Natural killer cell (primary cell): ENCODE measurements at regions of chr14 and their contacts with region 1.

Region 1: DNA sequence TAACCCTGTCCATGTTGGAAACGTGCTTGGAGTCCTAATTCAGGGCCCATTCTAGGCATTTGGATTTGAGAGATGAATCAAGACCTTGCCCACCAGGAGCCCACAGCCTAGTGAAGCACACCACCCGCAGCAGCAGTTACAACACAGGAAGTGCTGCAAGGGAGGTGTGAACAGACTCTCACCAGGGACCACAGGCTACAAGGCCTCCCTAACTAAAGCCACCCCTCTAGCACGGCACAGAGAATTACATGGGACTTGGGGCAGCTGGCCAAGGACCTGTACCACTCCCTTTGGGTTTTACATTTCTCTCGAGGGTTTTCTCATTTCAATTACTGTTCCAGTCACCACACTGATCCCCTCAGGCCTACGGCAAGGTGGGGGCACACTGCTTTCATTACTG is 49.5 kb upstream of the FOXN3 start:
- DNase-seq: peak; percentile 68 to 76
- ATAC-seq: peak; percentile 96 to 100 (median 99)
- H3K4me3 ChIP-seq: no peak overlapping the region
- H3K4me3 Mint-ChIP-seq: peak overlapping the region; percentile 87
- H3K27ac ChIP-seq: peak overlapping the region; percentile 71
- H3K27ac Mint-ChIP-seq: peak overlapping the region; percentile 85 to 95
- H3K4me1 ChIP-seq: peaks cover 44% of the 10 kb centered on the region
- H3K4me1 Mint-ChIP-seq: peaks cover 67 to 81% of the 10 kb centered on the region in 2 donors
- H3K27me3 ChIP-seq: no peaks in the 10 kb centered on the region
- H3K27me3 Mint-ChIP-seq: no peaks in the 10 kb centered on the region
- CTCF ChIP-seq: no peak

Region 2: GRCh38 chr14:89198544-89199329 is 267.7 kb before region 1 on chr14:
- intact Hi-C with region 1: no loop called
- DNase-seq: no peak
- ATAC-seq: peak in 1 of 3 donors; percentile 46
- H3K4me3 ChIP-seq: no peak overlapping the region
- H3K4me3 Mint-ChIP-seq: no peak overlapping the region
- H3K27ac ChIP-seq: no peak overlapping the region
- H3K27ac Mint-ChIP-seq: peak overlapping the region; percentile 1 to 27
- H3K4me1 ChIP-seq: peaks cover 34% of the 10 kb centered on the region
- H3K4me1 Mint-ChIP-seq: peaks cover 84 to 85% of the 10 kb centered on the region in 2 donors
- H3K27me3 ChIP-seq: no peaks in the 10 kb centered on the region
- H3K27me3 Mint-ChIP-seq: no peaks in the 10 kb centered on the region
- CTCF ChIP-seq: no peak

Region 3: GRCh38 chr14:89365061-89365801 is 101.3 kb before region 1 on chr14:
- intact Hi-C with region 1: loop called (anchors 2 kb)
- DNase-seq: peak; percentile 38 to 83
- ATAC-seq: peak; percentile 92 to 96 (median 96)
- H3K4me3 ChIP-seq: peak overlapping the region; percentile 13
- H3K4me3 Mint-ChIP-seq: peak overlapping the region; percentile 88
- H3K27ac ChIP-seq: peak overlapping the region; percentile 86
- H3K27ac Mint-ChIP-seq: peak overlapping the region; percentile 88 to 90
- H3K4me1 ChIP-seq: peaks cover 34% of the 10 kb centered on the region
- H3K4me1 Mint-ChIP-seq: peaks cover 49 to 59% of the 10 kb centered on the region in 2 donors
- H3K27me3 ChIP-seq: no peaks in the 10 kb centered on the region
- H3K27me3 Mint-ChIP-seq: no peaks in the 10 kb centered on the region
- CTCF ChIP-seq: no peak

Region 4: DNA sequence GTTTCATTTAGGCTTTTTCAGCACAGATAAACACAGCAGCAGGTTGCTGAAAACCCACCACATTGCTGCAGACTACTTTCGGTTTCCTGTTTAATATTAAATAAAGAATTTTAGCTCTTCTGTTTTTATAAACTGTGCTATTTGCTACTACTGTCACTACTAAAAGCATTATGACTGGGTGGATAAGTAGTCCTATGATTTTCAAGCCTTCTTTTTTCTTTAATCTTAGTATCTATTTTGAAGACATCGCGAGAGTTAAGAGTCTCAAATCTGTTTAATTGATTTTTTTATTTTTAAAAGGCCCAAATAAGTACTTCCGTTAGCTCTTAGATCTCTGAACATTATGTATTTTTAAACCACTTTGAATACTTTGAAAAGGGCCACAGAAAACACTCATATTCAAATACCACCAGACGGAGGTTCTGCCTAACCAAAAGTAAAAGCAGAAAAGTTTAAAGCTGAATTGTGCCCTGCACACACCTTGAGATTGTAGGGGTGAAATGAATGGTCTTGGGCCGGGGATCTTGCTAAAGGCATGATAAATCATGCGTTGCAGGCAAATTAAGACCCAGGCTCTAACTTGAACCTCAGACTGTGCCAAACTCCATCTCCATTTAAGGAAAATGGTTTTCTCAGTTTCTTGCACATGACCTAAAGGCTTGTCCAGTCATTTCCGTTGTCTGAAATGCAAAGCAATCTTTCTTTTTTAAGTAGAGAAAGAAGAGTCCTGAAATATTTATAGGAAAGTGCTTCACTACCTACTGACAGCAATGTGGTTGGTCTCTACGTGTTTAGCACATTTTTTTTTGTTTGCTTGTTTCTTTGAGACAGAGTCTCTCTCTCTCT is 35.9 kb before region 1 on chr14:
- intact Hi-C with region 1: loop called (anchors 2 kb)
- DNase-seq: peak in 1 of 2 donors; percentile 77
- ATAC-seq: peak; percentile 63 to 72 (median 69)
- H3K4me3 ChIP-seq: peak overlapping the region; percentile 46
- H3K4me3 Mint-ChIP-seq: peak overlapping the region; percentile 97
- H3K27ac ChIP-seq: peak overlapping the region; percentile 85
- H3K27ac Mint-ChIP-seq: peak overlapping the region; percentile 96 to 98
- H3K4me1 ChIP-seq: peaks cover 75% of the 10 kb centered on the region
- H3K4me1 Mint-ChIP-seq: peaks cover 53 to 69% of the 10 kb centered on the region in 2 donors
- H3K27me3 ChIP-seq: no peaks in the 10 kb centered on the region
- H3K27me3 Mint-ChIP-seq: no peaks in the 10 kb centered on the region
- CTCF ChIP-seq: no peak

Region 5: DNA sequence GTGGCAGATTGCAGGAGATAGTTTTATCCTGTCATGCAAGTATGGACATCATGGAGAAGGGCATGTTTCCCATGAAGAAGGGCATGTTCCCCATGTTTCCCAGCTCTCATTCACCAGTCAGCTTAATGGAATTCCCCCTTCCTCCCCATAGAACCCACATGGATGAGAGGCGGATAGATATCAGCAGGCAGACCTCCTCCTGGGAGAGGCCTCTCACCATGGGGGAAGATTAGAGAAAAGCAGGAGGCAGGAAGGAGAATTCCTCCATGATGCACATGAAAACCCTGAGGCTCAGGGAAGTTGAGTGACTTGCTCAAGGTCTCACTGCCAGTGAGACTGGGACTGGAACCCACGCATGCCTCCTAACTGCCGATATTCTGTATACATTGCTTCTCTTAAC is 43.4 kb after region 1 on chr14:
- intact Hi-C with region 1: loop called (anchors 2 kb)
- DNase-seq: no peak
- ATAC-seq: no peak
- H3K4me3 ChIP-seq: no peak overlapping the region
- H3K4me3 Mint-ChIP-seq: peak overlapping the region; percentile 76
- H3K27ac ChIP-seq: peak overlapping the region; percentile 49
- H3K27ac Mint-ChIP-seq: peak overlapping the region; percentile 97
- H3K4me1 ChIP-seq: peaks cover 38% of the 10 kb centered on the region
- H3K4me1 Mint-ChIP-seq: peaks cover 61 to 65% of the 10 kb centered on the region in 2 donors
- H3K27me3 ChIP-seq: no peaks in the 10 kb centered on the region
- H3K27me3 Mint-ChIP-seq: no peaks in the 10 kb centered on the region
- CTCF ChIP-seq: no peak

Region 6: DNA sequence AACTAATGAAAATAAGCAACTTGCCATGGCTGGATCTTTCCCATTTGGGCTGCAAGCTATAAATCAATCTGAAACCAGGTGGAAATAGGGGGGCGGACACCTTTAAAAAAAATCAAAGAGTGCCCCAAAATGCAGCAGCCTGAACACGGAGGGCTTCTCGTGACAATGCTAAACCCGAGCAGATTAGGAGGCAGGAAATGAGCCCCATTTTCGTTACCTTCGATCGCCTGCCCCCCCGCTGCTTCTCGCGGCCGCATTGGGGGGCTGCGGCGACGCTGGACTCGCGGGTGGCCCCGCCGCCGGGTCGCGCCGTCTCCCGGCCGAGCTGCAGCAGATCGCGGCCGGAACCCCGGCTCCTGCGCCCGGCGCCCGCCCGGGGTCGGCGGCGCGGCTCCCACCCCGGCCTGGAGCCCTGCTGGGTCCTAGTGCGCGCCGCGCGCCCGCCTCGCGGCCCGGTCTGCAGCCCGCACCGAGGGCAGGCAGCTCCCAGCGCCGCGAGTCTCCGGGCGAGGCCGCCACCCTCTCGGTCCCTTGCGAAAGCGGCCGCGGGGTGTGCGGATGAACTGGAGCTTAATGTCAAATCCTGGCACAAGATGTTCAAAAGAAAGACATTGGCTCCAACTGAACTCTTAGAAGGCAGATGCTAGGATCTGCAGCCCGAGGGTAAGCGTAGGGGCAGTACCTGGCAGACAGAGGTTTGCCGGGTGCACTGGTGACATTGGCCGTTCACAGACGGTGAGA is 152.5 kb after region 1 on chr14:
- intact Hi-C with region 1: loop called (anchors 2 kb)
- DNase-seq: peak; percentile 70 to 84
- ATAC-seq: peak; percentile 38 to 71 (median 68)
- H3K4me3 ChIP-seq: peak overlapping the region; percentile 85
- H3K4me3 Mint-ChIP-seq: peak overlapping the region; percentile 97
- H3K27ac ChIP-seq: peak overlapping the region; percentile 96
- H3K27ac Mint-ChIP-seq: peak overlapping the region; percentile 90 to 98
- H3K4me1 ChIP-seq: peaks cover 24% of the 10 kb centered on the region
- H3K4me1 Mint-ChIP-seq: peaks cover 55 to 60% of the 10 kb centered on the region in 2 donors
- H3K27me3 ChIP-seq: no peaks in the 10 kb centered on the region
- H3K27me3 Mint-ChIP-seq: no peaks in the 10 kb centered on the region
- CTCF ChIP-seq: no peak

Region 7: GRCh38 chr14:89625244-89625713 is 158.8 kb after region 1 on chr14:
- intact Hi-C with region 1: loop called (anchors 1 kb)
- DNase-seq: no peak
- ATAC-seq: no peak
- H3K4me3 ChIP-seq: no peak overlapping the region
- H3K4me3 Mint-ChIP-seq: peak overlapping the region; percentile 40
- H3K27ac ChIP-seq: peak overlapping the region; percentile 85
- H3K27ac Mint-ChIP-seq: peak overlapping the region; percentile 90 to 95
- H3K4me1 ChIP-seq: peaks cover 33% of the 10 kb centered on the region
- H3K4me1 Mint-ChIP-seq: peaks cover 52 to 56% of the 10 kb centered on the region in 2 donors
- H3K27me3 ChIP-seq: no peaks in the 10 kb centered on the region
- H3K27me3 Mint-ChIP-seq: no peaks in the 10 kb centered on the region
- CTCF ChIP-seq: no peak

Region 8: GRCh38 chr14:89773644-89774316 is 307.3 kb after region 1 on chr14:
- intact Hi-C with region 1: loop called (anchors 5 kb)
- DNase-seq: peak; percentile 59 to 82
- ATAC-seq: peak; percentile 83 to 93 (median 89)
- H3K4me3 ChIP-seq: no peak overlapping the region
- H3K4me3 Mint-ChIP-seq: peak overlapping the region; percentile 74
- H3K27ac ChIP-seq: peak overlapping the region; percentile 28
- H3K27ac Mint-ChIP-seq: peak overlapping the region; percentile 76 to 83
- H3K4me1 ChIP-seq: peaks cover 27% of the 10 kb centered on the region
- H3K4me1 Mint-ChIP-seq: peaks cover 16 to 17% of the 10 kb centered on the region in 2 donors
- H3K27me3 ChIP-seq: no peaks in the 10 kb centered on the region
- H3K27me3 Mint-ChIP-seq: peaks cover 0 to 7% of the 10 kb centered on the region in 2 donors
- CTCF ChIP-seq: no peak